Mammary epithelial cell (primary cell): ENCODE measurements at regions of chr1 and their contacts with region 1.

Region 1: DNA sequence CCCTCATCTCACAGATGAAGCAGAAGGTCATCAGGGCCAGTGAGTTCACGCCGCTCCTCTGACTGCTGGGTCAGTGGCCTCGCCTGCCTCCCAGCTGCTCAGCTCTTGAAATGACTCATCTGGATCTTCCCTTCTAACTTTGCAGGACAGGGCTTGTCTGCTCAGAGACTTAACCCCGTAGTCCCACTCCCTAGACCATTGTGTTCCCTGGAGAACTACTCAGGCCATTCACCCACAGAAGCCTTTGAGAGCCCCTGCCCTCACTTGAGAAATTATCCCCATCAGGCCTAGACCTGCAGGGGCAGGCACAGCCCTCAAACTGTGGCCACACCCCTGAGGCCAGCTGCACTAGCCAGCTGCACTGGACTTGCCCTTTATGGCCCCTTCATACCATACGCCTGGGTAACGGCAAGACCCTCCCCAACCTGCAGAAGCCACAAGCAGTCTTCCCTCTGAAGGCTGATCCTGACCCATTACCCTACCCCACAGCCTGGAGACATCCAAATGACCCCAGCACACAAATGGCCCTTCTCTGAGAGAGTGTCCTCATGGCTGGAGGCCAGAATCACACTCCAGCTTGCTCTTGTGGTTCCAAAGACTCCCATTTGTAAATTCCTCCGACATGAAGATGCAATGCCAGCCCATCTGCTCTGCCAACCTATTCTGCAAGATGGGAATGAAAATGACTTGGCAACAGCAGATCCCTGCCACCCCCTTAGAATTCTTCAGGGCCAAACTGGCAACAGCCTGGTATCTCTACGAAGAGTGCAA is 33.2 kb downstream of the RCSD1 start:
- DNase-seq: peak; percentile 100
- H3K4me3 ChIP-seq: peak overlapping the region in 1 of 3 experiments; percentile 1
- H3K27ac ChIP-seq: peak overlapping the region; percentile 91
- H3K4me1 ChIP-seq: peaks cover 64% of the 10 kb centered on the region
- H3K27me3 ChIP-seq: no peaks in the 10 kb centered on the region
- CTCF ChIP-seq: no peak

Region 2: DNA sequence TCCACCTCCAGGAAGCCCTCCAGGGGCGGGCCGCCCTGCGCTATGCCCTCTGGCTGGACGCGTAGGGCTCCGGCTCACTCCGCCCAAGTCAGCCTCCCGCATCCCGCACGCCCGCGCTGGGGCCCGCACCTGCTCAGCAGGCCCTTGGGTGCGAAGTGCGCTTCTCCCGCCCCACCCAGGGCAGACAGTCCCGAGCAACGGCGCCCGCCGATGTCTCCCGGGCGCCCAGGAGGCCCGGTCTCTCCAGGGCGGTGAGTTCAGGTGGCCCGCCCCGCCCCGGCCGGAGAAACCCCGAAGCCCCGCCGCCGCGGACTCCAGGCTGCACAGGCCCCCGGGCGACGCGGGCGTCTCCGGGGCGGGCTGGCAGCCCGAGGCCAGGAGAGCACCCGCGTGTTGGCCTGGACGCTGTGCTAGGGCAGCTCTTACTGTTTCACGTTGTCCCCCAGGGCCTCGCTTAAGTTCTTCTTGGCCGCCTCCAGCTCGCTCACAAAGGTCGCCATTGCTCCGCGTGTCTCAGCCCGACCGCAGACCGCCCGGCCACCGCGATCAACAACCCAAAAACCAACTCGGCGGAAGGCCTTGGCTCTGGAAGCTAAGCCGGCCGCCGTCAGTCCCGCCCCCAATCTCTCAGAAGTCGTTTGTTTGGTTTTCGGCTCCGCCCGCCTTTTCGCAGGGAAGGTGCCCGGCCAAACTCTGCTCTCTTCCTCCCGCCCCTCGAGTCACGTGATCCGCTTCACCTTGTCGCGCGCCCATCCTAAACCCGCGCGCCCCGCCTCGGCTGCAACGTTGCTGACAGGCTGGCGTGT is 787.2 kb before region 1 on chr1 and contains the start of gene TADA1:
- CTCF ChIA-PET with region 1: no interaction called
- dilution Hi-C with region 1: no loop called
- in situ Hi-C with region 1: no loop called
- intact Hi-C with region 1: loop called (anchors 5 kb)
- DNase-seq: peak; percentile 98
- H3K4me3 ChIP-seq: peak within 1 kb of the TSS; percentile 76 to 87 (median 83)
- H3K27ac ChIP-seq: peak within 1 kb of the TSS; percentile 67
- H3K4me1 ChIP-seq: peaks cover 8% of the 10 kb centered on the region
- H3K27me3 ChIP-seq: no peaks in the 10 kb centered on the region
- CTCF ChIP-seq: no peak
- total RNA-seq, gene TADA1: 8.6 to 13.5 TPM

Region 3: GRCh38 chr1:167553136-167554027 is 109.8 kb before region 1 on chr1 and contains the start of gene CREG1:
- CTCF ChIA-PET with region 1: no interaction called
- dilution Hi-C with region 1: loop called (anchors 5 kb)
- in situ Hi-C with region 1: no loop called
- intact Hi-C with region 1: loop called (anchors 5 kb)
- DNase-seq: peak; percentile 92
- H3K4me3 ChIP-seq: peak within 1 kb of the TSS; percentile 65 to 89 (median 66)
- H3K27ac ChIP-seq: peak within 1 kb of the TSS; percentile 47
- H3K4me1 ChIP-seq: peaks cover 46% of the 10 kb centered on the region
- H3K27me3 ChIP-seq: no peaks in the 10 kb centered on the region
- CTCF ChIP-seq: no peak
- total RNA-seq, gene CREG1: 105 to 242 TPM

Region 4: GRCh38 chr1:167599957-167600581 is 63.1 kb before region 1 on chr1:
- CTCF ChIA-PET with region 1: no interaction called
- dilution Hi-C with region 1: no loop called
- in situ Hi-C with region 1: no loop called
- intact Hi-C with region 1: loop called (anchors 1 kb)
- DNase-seq: peak; percentile 63
- H3K4me3 ChIP-seq: no peak overlapping the region
- H3K27ac ChIP-seq: no peak overlapping the region
- H3K4me1 ChIP-seq: peaks cover 18% of the 10 kb centered on the region
- H3K27me3 ChIP-seq: no peaks in the 10 kb centered on the region
- CTCF ChIP-seq: peak; percentile 59 to 64

Region 5: DNA sequence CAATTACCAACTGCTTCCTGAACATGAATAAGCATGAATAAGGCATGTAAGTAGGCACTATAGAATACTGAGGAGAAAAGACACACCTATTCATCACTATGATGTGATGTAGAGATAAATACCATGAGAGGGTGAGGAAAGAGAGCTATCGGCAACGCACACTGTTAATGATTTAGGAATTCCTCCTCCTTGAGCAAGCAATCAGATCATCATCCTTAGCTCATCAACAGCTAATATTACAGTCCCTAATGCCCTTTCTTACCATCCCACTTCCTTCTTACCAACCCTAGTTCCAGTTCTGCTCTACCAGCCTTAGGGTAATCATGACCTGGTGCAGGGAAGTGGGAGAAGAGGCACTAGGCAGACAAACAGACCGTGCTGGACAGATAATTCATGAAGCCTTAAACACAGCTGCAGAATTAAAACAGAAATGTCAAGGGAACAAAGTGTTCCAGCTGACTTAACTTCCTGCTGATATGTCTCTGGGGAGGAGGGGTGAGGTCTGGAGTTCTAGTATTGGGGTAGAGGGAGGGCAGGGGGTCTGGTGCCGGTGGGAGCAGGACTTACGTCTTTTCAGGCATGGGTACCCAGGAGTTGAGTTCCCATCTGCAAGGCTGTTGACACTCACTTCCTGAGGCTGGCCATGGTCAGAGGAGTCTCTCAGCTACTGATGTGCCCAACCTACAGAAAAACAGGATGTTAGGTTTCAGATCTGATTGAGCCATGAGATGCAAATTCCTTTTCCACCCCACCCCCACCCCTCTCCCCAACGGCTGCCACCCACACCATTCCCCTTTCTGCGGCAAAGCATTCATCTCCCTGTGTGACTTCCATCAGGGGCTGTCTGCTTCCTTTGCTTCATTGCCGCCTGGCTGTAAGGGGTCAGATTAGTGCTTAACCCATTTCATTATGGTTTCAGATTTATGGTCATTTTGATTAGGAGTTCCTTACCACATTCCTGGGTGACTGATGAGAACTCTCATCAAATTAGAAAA is 45.7 kb before region 1 on chr1:
- CTCF ChIA-PET with region 1: interaction called, 4 read pairs
- dilution Hi-C with region 1: no loop called
- in situ Hi-C with region 1: loop called in 1 of 2 experiments (anchors 5 kb)
- intact Hi-C with region 1: loop called (anchors 1 kb)
- DNase-seq: peak; percentile 80
- H3K4me3 ChIP-seq: no peak overlapping the region
- H3K27ac ChIP-seq: peak overlapping the region; percentile 77
- H3K4me1 ChIP-seq: peaks cover 20% of the 10 kb centered on the region
- H3K27me3 ChIP-seq: no peaks in the 10 kb centered on the region
- CTCF ChIP-seq: no peak